ENCODE measurements at regions of chr6 and their contacts with region 1.

Region 1: GRCh38 chr6:32118782-32119628 is 9.0 kb downstream of the ATF6B start:
- DNase-seq: no peak
- H3K4me3 ChIP-seq: no peak overlapping the region
- CTCF ChIP-seq: peak; percentile 97

Region 2: DNA sequence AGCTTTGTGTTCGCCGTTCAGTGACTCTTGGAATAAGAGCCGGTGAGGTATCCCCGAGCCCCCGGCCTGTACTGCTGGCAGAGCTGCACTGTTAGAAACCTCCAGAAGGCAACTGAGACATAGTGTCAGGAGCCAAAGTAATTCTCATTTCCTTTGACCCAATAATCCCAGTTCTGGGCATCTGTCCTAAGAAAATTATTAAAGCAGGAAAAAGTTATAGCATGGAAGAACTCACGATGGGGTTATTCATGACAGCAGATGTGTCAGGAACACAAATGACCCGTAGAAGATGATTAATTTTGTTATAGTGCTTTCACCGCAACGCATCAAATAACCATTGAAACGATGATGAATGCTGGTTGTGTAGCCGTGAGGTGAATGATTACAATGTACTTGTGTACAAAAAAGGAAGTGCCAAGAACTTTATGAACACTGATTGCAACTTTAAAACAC is 60.5 kb before region 1 on chr6:
- CTCF ChIA-PET with region 1: no interaction called
- POLR2A ChIA-PET with region 1: no interaction called
- DNase-seq: no peak
- H3K4me3 ChIP-seq: no peak overlapping the region
- CTCF ChIP-seq: no peak

Region 3: DNA sequence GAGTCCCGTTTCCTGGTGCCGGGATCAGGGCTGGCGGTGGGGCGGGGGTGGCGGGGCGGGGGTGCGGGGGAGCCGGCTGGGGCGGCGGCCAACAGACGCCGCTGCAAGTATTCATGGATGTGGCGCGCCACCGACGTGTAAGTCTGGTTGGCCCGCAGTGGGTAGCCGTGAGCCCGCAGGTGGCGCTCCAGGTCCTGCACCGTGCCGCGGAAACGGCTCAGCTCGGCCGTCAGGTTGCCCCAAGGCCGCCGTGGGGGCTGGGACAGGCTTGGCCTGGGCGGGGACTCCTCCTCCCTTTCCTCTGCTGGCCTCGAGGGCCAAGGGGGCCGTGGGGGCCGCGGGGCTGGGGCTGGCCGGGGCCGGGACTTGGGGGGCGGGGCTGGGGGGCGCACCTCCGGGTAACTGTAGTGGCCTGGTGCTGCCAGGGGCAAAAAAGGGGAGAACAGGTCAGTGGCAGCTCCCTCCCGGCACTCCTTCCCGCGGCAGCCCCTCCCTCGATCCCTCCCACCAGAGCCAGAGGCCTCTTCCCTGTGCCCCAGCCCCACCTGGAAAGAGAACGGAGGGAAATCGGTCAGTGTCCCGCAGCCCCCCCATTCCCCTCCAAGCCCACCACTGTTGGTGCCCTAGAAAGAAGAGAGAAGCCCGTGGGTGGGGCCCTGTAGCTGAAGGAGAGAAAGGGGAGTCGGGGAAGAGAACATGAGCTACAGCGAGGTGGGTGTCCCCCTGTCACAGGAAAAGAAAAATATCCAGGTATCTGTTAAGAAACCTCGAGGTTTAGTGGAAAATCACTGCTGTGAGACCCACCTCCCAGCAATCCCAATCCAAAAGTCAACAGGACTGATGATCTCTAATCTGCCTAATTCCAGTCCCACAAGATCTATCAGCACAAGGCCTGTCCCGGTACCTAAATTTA is 31.2 kb before region 1 on chr6:
- CTCF ChIA-PET with region 1: interaction called, 32 read pairs
- POLR2A ChIA-PET with region 1: interaction called, 4 read pairs
- DNase-seq: no peak
- H3K4me3 ChIP-seq: no peak overlapping the region
- CTCF ChIP-seq: peak; percentile 79

Region 4: GRCh38 chr6:32108094-32108627 is 10.8 kb before region 1 on chr6:
- CTCF ChIA-PET with region 1: interaction called, 66 read pairs
- POLR2A ChIA-PET with region 1: no interaction called
- DNase-seq: no peak
- H3K4me3 ChIP-seq: no peak overlapping the region
- CTCF ChIP-seq: no peak

Region 5: GRCh38 chr6:32163559-32164258 is 44.7 kb after region 1 on chr6:
- CTCF ChIA-PET with region 1: interaction called, 24 read pairs
- POLR2A ChIA-PET with region 1: no interaction called
- DNase-seq: no peak
- H3K4me3 ChIP-seq: no peak overlapping the region
- CTCF ChIP-seq: no peak

Region 6: DNA sequence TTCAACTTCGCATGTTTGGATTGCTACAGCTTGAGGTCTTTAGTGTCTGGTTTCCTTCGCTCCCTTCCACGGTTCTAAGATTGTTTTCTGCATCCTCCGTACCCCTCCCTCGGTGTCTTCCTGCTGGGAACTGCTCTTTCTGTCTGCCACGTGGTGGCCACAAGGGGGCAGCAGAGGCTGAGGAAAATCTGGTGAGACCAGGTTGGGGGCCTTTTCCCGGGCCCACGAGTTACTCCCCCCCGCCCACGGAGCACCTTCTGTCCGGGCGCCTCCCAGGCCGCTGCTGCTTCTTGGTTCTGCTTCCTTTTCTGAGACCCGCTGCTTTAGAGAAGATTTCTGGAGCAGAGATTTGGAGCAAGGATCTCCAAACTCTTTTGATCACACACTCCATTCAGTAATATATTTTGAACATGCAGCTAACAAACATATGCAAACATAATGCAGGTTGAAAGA is 126.0 kb after region 1 on chr6:
- CTCF ChIA-PET with region 1: interaction called, 15 read pairs
- POLR2A ChIA-PET with region 1: no interaction called
- DNase-seq: no peak
- H3K4me3 ChIP-seq: no peak overlapping the region
- CTCF ChIP-seq: peak; percentile 85

Region 7: GRCh38 chr6:32415511-32416019 is 296.6 kb after region 1 on chr6:
- CTCF ChIA-PET with region 1: no interaction called
- POLR2A ChIA-PET with region 1: no interaction called
- DNase-seq: peak; percentile 7
- H3K4me3 ChIP-seq: no peak overlapping the region
- CTCF ChIP-seq: peak; percentile 91